AG04450 (cell line): ENCODE measurements at regions of chrX and their contacts with region 1.

Region 1: GRCh38 chrX:43958529-43958928 is 14.7 kb downstream of the NDP start:
- DNase-seq: peak; percentile 34
- H3K4me3 ChIP-seq: no peak overlapping the region
- H3K27ac ChIP-seq: no peak overlapping the region
- H3K27me3 ChIP-seq: no peaks in the 10 kb centered on the region
- CTCF ChIP-seq: peak; percentile 67

Region 2: GRCh38 chrX:43860646-43861370 is 97.7 kb before region 1 on chrX:
- CTCF ChIA-PET with region 1: interaction called, 12 read pairs
- POLR2A ChIA-PET with region 1: no interaction called
- DNase-seq: no peak
- H3K4me3 ChIP-seq: no peak overlapping the region
- H3K27ac ChIP-seq: no peak overlapping the region
- H3K27me3 ChIP-seq: no peaks in the 10 kb centered on the region
- CTCF ChIP-seq: no peak

Region 3: GRCh38 chrX:43978226-43978625 is 19.7 kb after region 1 on chrX:
- CTCF ChIA-PET with region 1: interaction called, 10 read pairs
- POLR2A ChIA-PET with region 1: no interaction called
- DNase-seq: no peak
- H3K4me3 ChIP-seq: no peak overlapping the region
- H3K27ac ChIP-seq: no peak overlapping the region
- H3K27me3 ChIP-seq: no peaks in the 10 kb centered on the region
- CTCF ChIP-seq: no peak

Region 4: GRCh38 chrX:44025555-44025954 is 67.0 kb after region 1 on chrX:
- CTCF ChIA-PET with region 1: interaction called, 12 read pairs
- POLR2A ChIA-PET with region 1: no interaction called
- DNase-seq: no peak
- H3K4me3 ChIP-seq: no peak overlapping the region
- H3K27ac ChIP-seq: no peak overlapping the region
- H3K27me3 ChIP-seq: no peaks in the 10 kb centered on the region
- CTCF ChIP-seq: no peak

Region 5: GRCh38 chrX:44244008-44244407 is 285.5 kb after region 1 on chrX:
- CTCF ChIA-PET with region 1: interaction called, 82 read pairs
- POLR2A ChIA-PET with region 1: no interaction called
- DNase-seq: no peak
- H3K4me3 ChIP-seq: no peak overlapping the region
- H3K27ac ChIP-seq: no peak overlapping the region
- H3K27me3 ChIP-seq: no peaks in the 10 kb centered on the region
- CTCF ChIP-seq: peak; percentile 58

Region 6: DNA sequence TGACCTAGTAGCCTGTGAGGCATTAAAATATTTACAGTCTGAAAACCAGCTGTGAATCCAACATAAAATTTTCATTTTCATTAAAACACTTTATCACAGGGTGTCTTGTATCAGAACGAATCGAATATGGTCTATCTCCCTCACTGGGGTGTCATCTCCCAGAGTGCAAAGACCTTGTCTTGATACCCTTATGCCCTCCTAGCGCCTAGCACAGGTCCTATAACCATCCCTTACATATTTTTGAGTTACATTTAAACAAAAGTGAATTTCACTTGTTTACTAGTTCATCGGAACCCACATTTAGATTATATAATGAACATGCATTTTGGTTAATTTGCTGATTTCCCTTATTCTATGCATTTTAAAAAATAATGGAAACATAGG is 1228.1 kb after region 1 on chrX:
- CTCF ChIA-PET with region 1: interaction called, 13 read pairs
- POLR2A ChIA-PET with region 1: no interaction called
- DNase-seq: no peak
- H3K4me3 ChIP-seq: no peak overlapping the region; the same call in 1 of the 2 replicates
- H3K27ac ChIP-seq: no peak overlapping the region
- H3K27me3 ChIP-seq: no peaks in the 10 kb centered on the region
- CTCF ChIP-seq: no peak